ENCODE measurements at regions of chr14 and their contacts with region 1.

Region 1: DNA sequence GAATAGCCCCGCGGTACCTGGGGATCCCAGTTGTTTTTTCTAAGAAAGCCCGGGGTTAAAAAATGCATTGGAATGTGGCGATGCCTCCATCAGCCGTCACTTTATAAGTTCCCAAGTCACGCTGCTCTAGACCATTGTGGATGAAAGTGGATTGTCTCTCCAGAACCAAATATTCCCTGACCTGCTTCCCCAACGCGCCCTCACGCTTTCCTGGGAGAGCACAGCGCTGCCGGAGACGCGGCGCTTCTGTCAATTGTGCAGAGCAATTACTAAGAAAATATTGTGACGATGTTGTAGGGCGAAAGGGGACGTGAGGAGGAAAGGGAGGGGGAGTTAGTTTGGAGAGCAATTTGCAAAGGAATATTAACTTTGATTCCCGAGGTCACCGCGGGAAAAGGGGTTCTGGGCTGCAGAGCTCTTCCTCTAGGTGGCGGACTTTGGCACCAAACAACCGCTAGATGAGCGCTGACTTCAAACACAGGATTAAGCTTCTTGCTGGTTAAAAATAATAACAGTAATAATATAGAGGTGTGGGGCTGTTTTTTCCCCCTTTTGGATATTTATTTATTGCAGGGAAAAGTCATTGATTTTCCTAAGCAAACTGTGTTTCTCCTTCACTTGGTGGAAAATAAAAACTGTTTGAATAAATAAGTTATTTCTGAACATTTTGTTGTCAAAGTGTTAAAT is 9.6 kb upstream of the FOXG1 start:
- DNase-seq: no peak
- ATAC-seq: no peak
- H3K4me3 ChIP-seq: no peak overlapping the region
- H3K27ac ChIP-seq: no peak overlapping the region
- H3K4me1 ChIP-seq: peaks cover 0 to 19% (median 0%) of the 10 kb centered on the region in 12 donors
- H3K27me3 ChIP-seq: peaks cover 60 to 92% (median 76%) of the 10 kb centered on the region in 9 donors
- CTCF ChIP-seq: peak in 10 of 12 donors; percentile 11 to 53 (median 38)
- POLR2A ChIP-seq: no peak

Region 2: GRCh38 chr14:29536886-29537511 is 780.0 kb after region 1 on chr14:
- intact Hi-C with region 1: loop called in 7 of 10 experiments (anchors 5 to 10 kb)
- DNase-seq: no peak
- ATAC-seq: no peak
- H3K4me3 ChIP-seq: no peak overlapping the region
- H3K27ac ChIP-seq: no peak overlapping the region
- H3K4me1 ChIP-seq: no peaks in the 10 kb centered on the region
- H3K27me3 ChIP-seq: no peaks in the 10 kb centered on the region
- CTCF ChIP-seq: peak in 11 of 12 donors; percentile 13 to 50 (median 33)
- POLR2A ChIP-seq: no peak

Region 3: GRCh38 chr14:29993143-29993542 is 1236.1 kb after region 1 on chr14:
- intact Hi-C with region 1: loop called in 1 of 10 experiments (anchors 5 kb)
- DNase-seq: no peak
- ATAC-seq: no peak
- H3K4me3 ChIP-seq: no peak overlapping the region
- H3K27ac ChIP-seq: no peak overlapping the region
- H3K4me1 ChIP-seq: no peaks in the 10 kb centered on the region
- H3K27me3 ChIP-seq: no peaks in the 10 kb centered on the region
- CTCF ChIP-seq: no peak
- POLR2A ChIP-seq: no peak

Region 4: DNA sequence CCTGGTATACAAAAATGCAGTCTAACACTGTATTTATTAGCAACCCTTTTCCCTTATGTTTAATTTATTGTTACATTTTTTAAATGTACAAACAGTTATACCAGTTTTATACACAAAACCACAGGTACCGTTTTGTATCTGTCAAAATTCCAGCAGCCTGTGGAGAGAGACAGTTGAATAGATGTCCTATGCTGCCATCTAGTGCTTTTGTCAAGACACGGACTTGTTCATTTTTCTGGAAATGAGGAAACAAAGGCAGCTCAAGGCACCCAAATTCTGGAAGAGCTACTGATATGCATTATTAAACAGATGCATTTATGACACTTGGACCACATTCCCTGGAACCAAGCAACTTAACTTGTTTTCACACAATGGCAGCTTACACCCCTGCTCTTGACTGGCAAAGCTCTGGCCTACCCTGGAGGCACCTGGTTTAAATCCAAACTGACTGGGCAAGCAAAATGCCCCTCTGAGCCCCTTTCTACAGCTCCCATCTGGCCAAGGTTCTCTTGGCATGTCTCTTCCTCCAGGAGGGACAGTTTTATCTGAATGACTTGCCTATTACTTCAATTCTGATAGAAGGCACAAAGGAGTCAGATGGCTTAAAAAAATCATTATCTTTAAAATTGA is 1457.5 kb after region 1 on chr14:
- intact Hi-C with region 1: loop called in 9 of 10 experiments (anchors 5 to 10 kb)
- DNase-seq: no peak
- ATAC-seq: peak in 2 of 4 donors; percentile 33 to 41
- H3K4me3 ChIP-seq: no peak overlapping the region
- H3K27ac ChIP-seq: no peak overlapping the region
- H3K4me1 ChIP-seq: no peaks in the 10 kb centered on the region
- H3K27me3 ChIP-seq: peaks cover 0 to 6% (median 0%) of the 10 kb centered on the region in 9 donors
- CTCF ChIP-seq: peak in 11 of 12 donors; percentile 36 to 67 (median 55)
- POLR2A ChIP-seq: no peak

Measured in heart left ventricle (tissue), 16 donors.